Endothelial cell of umbilical vein (primary cell): ENCODE measurements at regions of chr7 and their contacts with region 1.

Region 1: GRCh38 chr7:44606450-44607254 is at the start of gene OGDH:
- DNase-seq: peak; percentile 99
- H3K4me3 ChIP-seq: peak within 1 kb of the TSS; percentile 57 to 98 (median 81)
- H3K27ac ChIP-seq: peak within 1 kb of the TSS; percentile 80
- H3K4me1 ChIP-seq: peaks cover 11% of the 10 kb centered on the region
- H3K27me3 ChIP-seq: peaks cover 0 to 2% of the 10 kb centered on the region in 2 experiments
- CTCF ChIP-seq: no peak
- POLR2A ChIP-seq: peak; percentile 86
- total RNA-seq, gene OGDH: 81.4 and 88.9 TPM in 2 replicates

Region 2: DNA sequence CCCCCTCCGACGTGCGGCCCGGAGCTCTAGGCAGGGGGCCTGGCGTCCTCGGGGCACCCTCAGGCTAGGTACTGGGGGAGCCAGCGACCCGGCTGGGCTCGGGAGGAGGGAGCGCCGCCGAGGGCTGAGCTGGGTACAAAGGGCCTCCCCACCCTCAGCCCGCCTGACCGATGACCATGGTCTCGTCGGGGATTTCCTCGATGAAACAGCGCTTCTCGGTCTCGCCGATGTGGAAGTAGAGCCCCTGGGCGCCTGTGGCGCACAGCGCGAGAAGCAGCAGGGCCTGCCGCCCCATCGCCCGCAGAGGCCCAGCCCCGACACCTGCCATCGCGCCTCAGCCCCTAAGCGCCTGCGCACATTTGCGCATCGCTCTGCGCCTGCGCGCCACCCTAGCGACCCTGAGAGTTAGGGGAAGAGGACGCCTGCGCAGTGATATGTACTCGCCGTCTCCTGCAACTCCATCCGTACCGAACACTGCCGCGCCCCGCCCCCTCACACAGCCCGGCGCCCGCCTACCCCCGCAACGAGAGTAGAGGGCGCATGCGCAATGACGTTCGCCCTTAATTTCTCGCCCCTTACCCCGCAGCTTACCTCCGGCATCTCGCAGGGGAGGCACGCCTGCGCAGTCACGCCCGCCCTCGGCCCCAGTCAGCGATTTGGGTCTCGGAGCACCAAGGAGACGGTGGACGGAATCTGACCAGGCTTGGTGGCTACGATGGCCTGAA is 24.6 kb before region 1 on chr7 and contains the start of gene TMED4:
- CTCF ChIA-PET with region 1: interaction called, 5 read pairs
- POLR2A ChIA-PET with region 1: no interaction called
- dilution Hi-C with region 1: no loop called
- intact Hi-C with region 1: loop called (anchors 1 kb)
- DNase-seq: peak; percentile 99
- H3K4me3 ChIP-seq: peak within 1 kb of the TSS; percentile 34 to 78 (median 67)
- H3K27ac ChIP-seq: peak within 1 kb of the TSS; percentile 73
- H3K4me1 ChIP-seq: peaks cover 8% of the 10 kb centered on the region
- H3K27me3 ChIP-seq: no peaks in the 10 kb centered on the region
- CTCF ChIP-seq: no peak
- POLR2A ChIP-seq: peak; percentile 98
- total RNA-seq, gene TMED4: 63.4 and 65.4 TPM in 2 replicates

Region 3: DNA sequence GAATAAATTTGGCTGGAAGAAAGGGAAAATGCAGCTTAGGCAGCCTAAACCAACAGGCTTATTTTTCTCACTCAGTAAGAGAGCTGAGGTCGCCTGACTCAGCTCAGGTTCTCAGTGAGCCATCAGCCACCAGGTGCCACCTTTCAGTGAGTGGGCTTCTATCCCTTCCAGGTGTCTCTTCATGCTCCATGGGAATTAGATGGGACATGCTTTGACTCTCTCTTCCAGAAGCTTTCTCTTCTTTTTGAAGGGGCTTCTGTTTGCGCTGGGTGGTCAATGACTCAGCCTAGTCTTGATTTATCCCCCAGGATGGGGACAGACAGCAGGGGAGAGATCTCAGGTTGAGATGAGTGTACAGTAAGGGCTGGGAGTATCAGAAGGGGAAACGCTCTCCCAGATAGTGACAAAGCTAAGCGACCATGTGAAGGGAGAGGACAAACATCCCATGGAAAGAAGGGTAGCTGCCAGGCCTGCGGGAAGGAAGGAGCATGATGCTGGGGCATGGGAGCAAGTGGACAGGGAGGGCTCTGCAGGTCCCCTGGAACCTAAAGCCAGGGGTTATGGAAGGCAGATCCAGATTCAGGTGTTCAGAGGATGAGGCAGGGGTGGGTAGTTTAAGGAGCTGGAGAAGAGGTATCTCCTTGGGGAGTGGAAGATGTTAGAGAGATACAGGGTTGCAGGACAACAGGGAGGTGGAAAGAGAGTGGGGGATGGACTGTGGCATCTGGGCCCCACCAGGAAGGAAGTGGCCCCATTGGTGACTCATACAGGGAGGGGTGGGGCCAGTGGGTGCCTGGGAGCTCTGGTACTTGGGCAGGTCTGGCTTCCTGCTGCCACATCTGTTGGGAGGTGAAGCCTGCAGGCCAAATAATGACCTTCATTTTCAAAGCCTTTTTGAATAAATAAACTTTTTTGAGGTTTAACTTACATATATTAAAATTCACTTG is 32.2 kb after region 1 on chr7:
- CTCF ChIA-PET with region 1: interaction called, 11 read pairs
- POLR2A ChIA-PET with region 1: interaction called, 6 read pairs
- dilution Hi-C with region 1: no loop called
- intact Hi-C with region 1: loop called (anchors 1 kb)
- DNase-seq: peak; percentile 67
- H3K4me3 ChIP-seq: no peak overlapping the region
- H3K27ac ChIP-seq: peak overlapping the region; percentile 88
- H3K4me1 ChIP-seq: peaks cover 47% of the 10 kb centered on the region
- H3K27me3 ChIP-seq: no peaks in the 10 kb centered on the region
- CTCF ChIP-seq: no peak
- POLR2A ChIP-seq: peak; percentile 37

Region 4: GRCh38 chr7:44748045-44748947 is 141.6 kb after region 1 on chr7 and contains the start of gene ZMIZ2:
- CTCF ChIA-PET with region 1: interaction called, 4 read pairs
- POLR2A ChIA-PET with region 1: interaction called, 4 read pairs
- dilution Hi-C with region 1: no loop called
- intact Hi-C with region 1: loop called (anchors 1 kb)
- DNase-seq: peak; percentile 88
- H3K4me3 ChIP-seq: peak within 1 kb of the TSS; percentile 46 to 98 (median 71)
- H3K27ac ChIP-seq: peak within 1 kb of the TSS; percentile 82
- H3K4me1 ChIP-seq: peaks cover 22% of the 10 kb centered on the region
- H3K27me3 ChIP-seq: no peaks in the 10 kb centered on the region
- CTCF ChIP-seq: no peak
- POLR2A ChIP-seq: peak; percentile 68
- total RNA-seq, gene ZMIZ2: 87.5 and 88.6 TPM in 2 replicates

Region 5: DNA sequence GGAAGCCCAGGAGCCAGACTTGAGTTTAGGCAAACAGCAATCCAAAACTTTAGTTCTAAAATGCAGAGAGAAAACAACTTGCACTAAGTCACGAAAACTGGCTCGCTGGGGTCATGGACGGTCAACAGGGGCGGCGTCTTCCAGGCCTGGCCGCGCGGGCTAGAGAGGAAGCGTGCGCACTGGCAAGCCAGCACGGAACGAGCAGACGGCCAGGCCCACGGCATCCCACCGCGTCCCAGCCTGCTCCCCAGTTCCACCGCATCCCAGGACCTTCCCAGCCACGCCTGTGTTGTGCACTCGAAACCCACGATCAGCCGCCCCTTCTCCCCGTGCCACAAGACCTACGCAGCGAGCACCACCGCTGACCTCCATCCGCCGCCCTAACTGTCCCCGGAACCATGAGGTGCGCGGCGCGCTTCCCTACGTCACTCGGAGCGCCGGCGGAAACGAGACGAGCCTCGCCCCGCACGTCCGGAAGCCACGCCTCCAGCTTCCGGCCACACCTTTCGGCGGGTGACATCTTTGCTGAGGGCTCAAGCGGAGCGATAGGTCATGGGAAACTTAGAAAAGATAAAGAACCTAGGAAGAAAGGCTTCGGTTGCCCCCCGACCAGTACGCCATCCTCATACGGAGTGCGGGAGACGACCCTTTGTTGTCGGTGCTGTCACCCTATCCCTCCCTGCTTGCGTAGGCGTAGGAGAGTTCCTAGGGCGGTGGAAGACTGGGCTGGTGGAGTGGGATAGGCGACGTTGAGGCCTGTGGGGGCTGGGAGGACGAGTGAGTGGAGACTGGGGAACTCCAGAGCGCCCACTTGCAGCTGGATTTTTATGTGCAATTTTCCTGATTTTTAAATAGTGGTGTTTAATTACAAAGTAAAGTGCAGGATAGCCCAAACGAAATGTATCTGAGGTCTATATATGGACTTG is 504.9 kb after region 1 on chr7 and contains the start of gene TBRG4:
- CTCF ChIA-PET with region 1: no interaction called
- POLR2A ChIA-PET with region 1: no interaction called
- dilution Hi-C with region 1: no loop called
- intact Hi-C with region 1: loop called (anchors 1 kb)
- DNase-seq: peak; percentile 93
- H3K4me3 ChIP-seq: peak within 1 kb of the TSS; percentile 33 to 88 (median 64)
- H3K27ac ChIP-seq: peak within 1 kb of the TSS; percentile 57
- H3K4me1 ChIP-seq: peaks cover 8% of the 10 kb centered on the region
- H3K27me3 ChIP-seq: peaks cover 11 to 26% of the 10 kb centered on the region in 2 experiments
- CTCF ChIP-seq: peak in 1 of 2 donors; percentile 42
- POLR2A ChIP-seq: peak; percentile 82
- total RNA-seq, gene TBRG4: 56.7 and 63.4 TPM in 2 replicates